Activated CD4-positive, alpha-beta memory T cell treated with anti-CD3 and anti-CD28 coated beads for 36 hours (primary cell): ENCODE measurements at regions of chr22 and their contacts with region 1.

Region 1: GRCh38 chr22:25081409-25081824 is 118.2 kb upstream of the CRYBB3 start:
- DNase-seq: peak; percentile 72
- H3K4me3 Mint-ChIP-seq: no peak overlapping the region
- H3K27ac Mint-ChIP-seq: no peak overlapping the region
- H3K4me1 Mint-ChIP-seq: peaks cover 48% of the 10 kb centered on the region
- H3K27me3 Mint-ChIP-seq: no peaks in the 10 kb centered on the region

Region 2: GRCh38 chr22:25048659-25049647 is 32.5 kb before region 1 on chr22:
- CTCF ChIA-PET with region 1: interaction called, 40 read pairs
- POLR2A ChIA-PET with region 1: interaction called, 5 read pairs
- intact Hi-C with region 1: no loop called
- DNase-seq: peak; percentile 80
- H3K4me3 Mint-ChIP-seq: no peak overlapping the region
- H3K27ac Mint-ChIP-seq: no peak overlapping the region
- H3K4me1 Mint-ChIP-seq: peaks cover 8% of the 10 kb centered on the region
- H3K27me3 Mint-ChIP-seq: peaks cover 6% of the 10 kb centered on the region

Region 3: DNA sequence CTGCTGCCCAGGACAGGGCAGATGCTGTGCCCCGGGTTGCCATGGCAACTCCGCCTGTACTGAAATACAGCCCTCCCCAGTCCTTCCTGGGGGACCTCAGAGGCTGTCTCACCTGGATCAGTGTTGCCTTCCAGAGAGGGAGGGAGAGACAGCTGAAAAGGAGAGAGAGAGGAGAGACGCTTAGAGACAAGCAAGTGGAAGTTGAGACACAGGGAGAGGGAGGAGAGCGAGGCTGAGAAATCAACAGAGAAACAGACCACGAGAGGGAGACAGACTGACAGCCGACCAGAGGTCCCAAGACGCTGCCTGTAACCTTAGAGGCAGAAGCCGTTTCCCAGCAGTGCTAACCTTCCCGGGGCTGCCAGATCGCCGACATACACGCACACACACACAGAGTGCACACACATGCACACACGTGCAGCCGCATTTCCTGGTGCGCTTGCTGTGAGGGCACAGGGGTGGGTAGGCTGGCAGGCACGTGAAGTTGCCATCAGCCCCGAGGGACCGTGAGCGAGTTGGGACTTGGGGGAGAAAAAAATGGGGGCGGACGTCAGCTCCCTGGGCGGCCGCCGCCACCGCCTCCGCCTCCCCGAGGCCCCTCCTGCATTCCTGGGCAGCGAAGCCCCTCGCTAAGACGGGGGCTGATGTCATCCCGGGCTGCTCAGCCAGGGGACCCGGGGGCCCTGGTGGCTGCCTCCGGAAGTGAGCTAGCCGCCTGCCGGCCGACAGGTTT is 29.6 kb after region 1 on chr22:
- CTCF ChIA-PET with region 1: interaction called, 38 read pairs
- POLR2A ChIA-PET with region 1: no interaction called
- intact Hi-C with region 1: no loop called
- DNase-seq: peak; percentile 62
- H3K4me3 Mint-ChIP-seq: peak overlapping the region; percentile 70
- H3K27ac Mint-ChIP-seq: no peak overlapping the region
- H3K4me1 Mint-ChIP-seq: peaks cover 10% of the 10 kb centered on the region
- H3K27me3 Mint-ChIP-seq: no peaks in the 10 kb centered on the region

Region 4: GRCh38 chr22:25202290-25202921 is 121.0 kb after region 1 on chr22:
- CTCF ChIA-PET with region 1: interaction called, 24 read pairs
- POLR2A ChIA-PET with region 1: no interaction called
- intact Hi-C with region 1: no loop called
- DNase-seq: peak; percentile 66
- H3K4me3 Mint-ChIP-seq: no peak overlapping the region
- H3K27ac Mint-ChIP-seq: no peak overlapping the region
- H3K4me1 Mint-ChIP-seq: no peaks in the 10 kb centered on the region
- H3K27me3 Mint-ChIP-seq: no peaks in the 10 kb centered on the region

Region 5: DNA sequence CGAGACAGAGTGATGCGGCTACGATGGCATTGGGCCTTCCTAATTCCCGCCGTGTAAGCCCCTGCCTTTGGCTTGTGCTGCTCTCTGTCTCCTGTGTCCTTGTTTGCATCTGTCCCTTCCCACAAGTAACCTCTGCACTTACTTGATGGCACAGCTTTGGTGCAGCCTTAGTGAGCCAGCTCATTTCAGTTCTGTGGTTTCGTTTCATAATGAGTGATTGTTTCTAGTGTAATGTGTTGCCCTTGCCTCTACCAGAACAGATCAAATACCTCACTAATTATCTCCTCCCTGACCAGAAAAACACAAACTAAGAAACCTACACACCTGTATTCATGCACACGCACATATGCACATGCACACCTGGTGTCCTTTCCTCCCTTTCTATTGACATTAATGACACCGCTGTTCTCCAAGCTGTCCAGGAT is 541.9 kb after region 1 on chr22:
- CTCF ChIA-PET with region 1: no interaction called
- POLR2A ChIA-PET with region 1: no interaction called
- intact Hi-C with region 1: loop called (anchors 5 kb)
- DNase-seq: peak; percentile 52
- H3K4me3 Mint-ChIP-seq: no peak overlapping the region
- H3K27ac Mint-ChIP-seq: peak overlapping the region; percentile 47
- H3K4me1 Mint-ChIP-seq: peaks cover 16% of the 10 kb centered on the region
- H3K27me3 Mint-ChIP-seq: peaks cover 8% of the 10 kb centered on the region